Left ventricle myocardium inferior (tissue), 1 donor: ENCODE measurements at regions of chr12 and their contacts with region 1.

Region 1: GRCh38 chr12:56645717-56646446 is at the start of gene ATP5F1B:
- DNase-seq: peak; percentile 95
- H3K4me3 ChIP-seq: peak within 1 kb of the TSS; percentile 87
- H3K27ac ChIP-seq: peak within 1 kb of the TSS; percentile 96
- H3K4me1 ChIP-seq: peaks cover 56% of the 10 kb centered on the region
- H3K27me3 ChIP-seq: no peaks in the 10 kb centered on the region
- CTCF ChIP-seq: no peak
- total RNA-seq, gene ATP5F1B: 3,068 TPM

Region 2: DNA sequence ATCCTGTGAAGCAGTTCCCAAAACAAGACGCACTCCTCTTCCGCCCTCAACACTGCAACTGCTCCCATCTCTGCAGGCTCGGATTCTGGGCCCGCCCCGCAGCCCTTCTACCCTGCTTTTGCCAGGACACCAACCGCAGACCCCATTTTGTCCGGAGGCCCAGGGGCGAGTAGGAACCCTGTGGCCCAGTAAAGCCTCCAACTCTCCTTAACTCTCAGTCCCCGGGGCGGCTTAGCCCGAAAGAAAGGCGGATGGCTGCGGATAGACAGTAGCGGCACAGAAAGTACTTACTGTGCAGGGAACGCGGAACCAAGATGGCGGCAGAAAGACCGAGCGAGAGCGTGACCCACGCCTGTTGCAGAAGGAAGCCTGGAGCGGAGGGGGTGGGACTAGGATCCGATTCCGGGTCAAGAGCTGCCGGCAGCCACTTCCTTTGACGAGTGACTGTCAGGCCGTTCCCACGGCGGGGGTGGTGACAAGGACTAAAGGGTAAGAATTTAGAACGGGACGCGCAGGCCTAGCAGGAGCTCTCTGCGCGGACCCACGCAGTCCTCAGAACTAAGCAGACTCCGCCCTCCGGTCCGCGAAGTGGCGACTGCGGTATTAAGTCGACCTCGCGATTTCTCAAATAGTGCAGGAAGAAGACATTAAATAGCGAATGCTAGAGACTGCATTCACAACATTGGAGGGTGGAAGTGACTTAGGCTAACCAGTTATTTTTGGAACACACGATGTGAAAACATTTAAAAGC is 79.3 kb after region 1 on chr12 and contains the start of gene NACA:
- intact Hi-C with region 1: loop called (anchors 10 kb)
- DNase-seq: peak; percentile 99
- H3K4me3 ChIP-seq: peak within 1 kb of the TSS; percentile 82
- H3K27ac ChIP-seq: peak within 1 kb of the TSS; percentile 95
- H3K4me1 ChIP-seq: peaks cover 49% of the 10 kb centered on the region
- H3K27me3 ChIP-seq: no peaks in the 10 kb centered on the region
- CTCF ChIP-seq: no peak
- total RNA-seq, gene NACA: 477 TPM

Region 3: DNA sequence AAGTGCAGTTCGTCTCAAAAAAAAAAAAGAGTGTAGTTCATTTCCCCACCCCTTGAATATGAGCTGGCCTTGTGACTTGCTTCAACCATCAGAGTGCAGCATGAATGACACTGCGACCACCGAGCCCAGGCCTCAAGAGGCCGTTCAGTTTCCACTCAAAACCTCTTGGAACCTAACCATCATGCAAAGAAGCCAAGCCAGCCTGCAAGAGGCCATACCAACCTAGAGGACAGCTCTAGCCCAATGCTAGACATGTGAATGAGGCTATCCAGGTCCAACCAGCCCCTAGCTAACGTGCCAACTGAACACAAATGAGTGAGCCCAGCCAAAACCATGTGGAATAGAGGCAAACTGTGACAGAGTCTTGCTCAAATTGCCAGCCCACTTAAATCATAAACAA is 755.3 kb after region 1 on chr12:
- intact Hi-C with region 1: no loop called
- DNase-seq: no peak
- H3K4me3 ChIP-seq: no peak overlapping the region
- H3K27ac ChIP-seq: peak overlapping the region; percentile 12
- H3K4me1 ChIP-seq: peaks cover 10% of the 10 kb centered on the region
- H3K27me3 ChIP-seq: no peaks in the 10 kb centered on the region
- CTCF ChIP-seq: no peak